CD4-positive, alpha-beta memory T cell (primary cell): ENCODE measurements at regions of chr19 and their contacts with region 1.

Region 1: DNA sequence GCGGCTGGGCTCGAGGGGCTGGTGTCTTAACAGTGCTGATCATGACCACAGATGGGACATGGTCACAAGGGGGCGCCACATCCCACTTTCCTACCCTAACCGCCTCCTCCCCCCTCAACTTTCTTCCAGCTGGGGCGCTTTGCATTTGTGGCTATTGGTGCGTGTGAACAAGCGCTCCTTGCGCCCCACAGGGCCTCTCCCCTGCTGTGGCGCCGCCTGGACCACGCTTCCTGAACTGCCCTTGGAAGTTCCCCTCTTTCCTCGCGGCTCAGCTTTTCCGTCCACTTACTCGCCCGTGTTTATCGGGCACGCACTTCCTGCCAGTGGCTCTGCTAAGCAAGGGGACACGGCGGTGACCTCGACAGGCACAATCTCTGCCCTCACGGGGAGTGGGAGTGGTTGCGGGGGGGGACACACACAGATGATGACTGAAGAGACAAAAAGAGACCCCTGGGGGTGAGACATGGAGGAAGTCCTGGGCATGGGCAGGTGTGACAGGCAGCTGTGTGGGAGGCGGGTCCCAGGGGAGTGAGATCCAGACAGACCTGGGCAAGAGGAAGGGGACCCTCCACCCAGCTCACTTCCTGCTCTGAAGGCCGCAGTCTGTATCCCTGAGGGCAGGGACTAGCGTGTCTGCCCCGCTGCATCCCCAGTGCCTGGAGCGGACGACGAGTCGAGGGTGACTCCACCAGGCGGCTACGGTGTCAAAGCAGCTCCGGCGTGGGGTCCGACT is 40.3 kb downstream of the ZNF787 start:
- DNase-seq: peak; percentile 47 to 74 (median 60)
- H3K4me3 ChIP-seq: peak overlapping the region; percentile 23 to 59
- H3K4me3 Mint-ChIP-seq: peak overlapping the region; percentile 79 to 94 (median 84)
- H3K27ac ChIP-seq: no peak overlapping the region
- H3K27ac Mint-ChIP-seq: peak overlapping the region in 2 of 7 donors; percentile 34 to 48
- H3K4me1 ChIP-seq: peaks cover 10% of the 10 kb centered on the region
- H3K4me1 Mint-ChIP-seq: peaks cover 10 to 15% (median 12%) of the 10 kb centered on the region in 4 donors
- H3K27me3 ChIP-seq: no peaks in the 10 kb centered on the region
- H3K27me3 Mint-ChIP-seq: peaks cover 0 to 5% of the 10 kb centered on the region in 2 donors

Region 2: GRCh38 chr19:56142087-56142787 is 61.4 kb after region 1 on chr19:
- CTCF ChIA-PET with region 1: no interaction called
- POLR2A ChIA-PET with region 1: no interaction called
- intact Hi-C with region 1: no loop called
- DNase-seq: no peak
- H3K4me3 ChIP-seq: peak overlapping the region; percentile 25 to 51
- H3K4me3 Mint-ChIP-seq: peak overlapping the region; percentile 78 to 96 (median 84)
- H3K27ac ChIP-seq: peak overlapping the region; percentile 73
- H3K27ac Mint-ChIP-seq: peak overlapping the region; percentile 78 to 92 (median 84)
- H3K4me1 ChIP-seq: peaks cover 22% of the 10 kb centered on the region
- H3K4me1 Mint-ChIP-seq: peaks cover 24 to 46% (median 33%) of the 10 kb centered on the region in 4 donors
- H3K27me3 ChIP-seq: no peaks in the 10 kb centered on the region
- H3K27me3 Mint-ChIP-seq: no peaks in the 10 kb centered on the region

Region 3: DNA sequence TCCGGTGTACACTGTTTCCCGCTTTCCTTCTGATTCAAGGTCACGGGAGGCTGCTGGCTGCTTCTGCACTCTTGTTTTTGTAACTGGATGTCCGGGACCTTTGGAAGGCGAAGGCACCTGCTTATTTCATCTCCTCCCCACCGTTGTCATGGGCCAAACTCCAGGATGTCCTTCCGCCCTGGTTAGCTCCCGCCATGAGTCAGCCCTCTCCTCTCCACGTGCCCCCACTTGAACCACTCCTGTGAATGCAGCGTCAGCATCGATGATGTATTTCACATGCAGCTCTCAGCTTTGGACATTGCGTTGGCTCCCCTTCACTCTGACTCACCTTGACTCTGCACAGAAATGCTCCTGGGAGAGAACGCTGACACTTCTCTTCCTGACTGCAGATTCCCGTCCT is 89.4 kb after region 1 on chr19:
- CTCF ChIA-PET with region 1: interaction called, 48 read pairs
- POLR2A ChIA-PET with region 1: no interaction called
- intact Hi-C with region 1: loop called (anchors 1 kb)
- DNase-seq: no peak
- H3K4me3 ChIP-seq: no peak overlapping the region
- H3K4me3 Mint-ChIP-seq: no peak overlapping the region
- H3K27ac ChIP-seq: no peak overlapping the region
- H3K27ac Mint-ChIP-seq: peak overlapping the region in 1 of 7 donors; percentile 9
- H3K4me1 ChIP-seq: no peaks in the 10 kb centered on the region
- H3K4me1 Mint-ChIP-seq: peaks cover 0 to 5% (median 3%) of the 10 kb centered on the region in 4 donors
- H3K27me3 ChIP-seq: no peaks in the 10 kb centered on the region
- H3K27me3 Mint-ChIP-seq: peaks cover 9 to 12% of the 10 kb centered on the region in 2 donors

Region 4: DNA sequence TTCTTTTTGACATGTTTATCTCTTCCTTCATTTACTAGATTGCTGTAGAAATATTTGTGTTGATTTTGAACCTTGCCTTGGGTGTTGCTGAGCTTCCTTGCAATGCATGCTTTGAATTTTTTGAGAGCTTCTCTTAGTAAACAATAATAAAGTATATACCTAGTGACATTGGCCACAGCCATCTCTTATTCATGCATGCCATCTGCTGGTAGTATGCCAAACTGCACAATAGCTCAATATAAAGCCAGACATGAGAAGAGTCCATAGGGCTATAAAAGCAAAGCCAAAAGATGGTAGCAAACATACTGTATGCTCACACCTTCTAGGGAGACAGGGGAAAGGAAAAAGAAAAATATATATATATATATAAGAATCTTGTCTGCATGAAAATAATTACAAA is 252.7 kb after region 1 on chr19:
- CTCF ChIA-PET with region 1: interaction called, 16 read pairs
- POLR2A ChIA-PET with region 1: no interaction called
- intact Hi-C with region 1: no loop called
- DNase-seq: peak in 4 of 5 donors; percentile 29 to 40 (median 40)
- H3K4me3 ChIP-seq: no peak overlapping the region
- H3K4me3 Mint-ChIP-seq: no peak overlapping the region
- H3K27ac ChIP-seq: no peak overlapping the region
- H3K27ac Mint-ChIP-seq: no peak overlapping the region
- H3K4me1 ChIP-seq: no peaks in the 10 kb centered on the region
- H3K4me1 Mint-ChIP-seq: no peaks in the 10 kb centered on the region
- H3K27me3 ChIP-seq: no peaks in the 10 kb centered on the region
- H3K27me3 Mint-ChIP-seq: peaks cover 3 to 6% of the 10 kb centered on the region in 2 donors

Region 5: DNA sequence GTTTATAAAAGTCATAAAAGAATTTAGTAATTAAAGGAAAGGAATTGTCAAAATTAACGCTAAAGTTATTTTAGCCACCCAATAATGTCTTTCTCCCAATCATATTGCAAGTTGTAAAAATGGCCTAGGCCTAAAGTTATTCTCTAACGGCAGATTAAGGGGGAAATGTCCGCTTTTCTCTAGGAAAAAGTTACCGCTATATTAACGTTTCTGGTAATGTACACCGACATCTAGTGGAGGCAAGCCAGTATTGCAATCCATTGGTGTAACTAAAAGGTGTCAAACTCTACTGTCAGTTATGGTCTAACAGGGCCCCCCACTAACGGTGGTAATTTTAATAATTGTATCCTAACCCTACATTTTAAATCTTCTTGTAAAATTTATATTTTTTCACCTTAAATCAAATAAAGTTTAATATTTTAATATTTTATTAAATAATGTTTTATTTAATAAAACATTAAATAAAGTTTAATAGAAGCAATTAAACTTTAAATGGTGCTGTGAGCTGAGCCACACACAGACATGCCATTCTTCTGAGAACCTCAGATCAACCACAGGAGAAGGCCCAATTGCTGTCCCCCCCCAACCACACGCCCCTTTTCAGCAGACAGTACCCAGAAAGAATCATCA is 269.7 kb after region 1 on chr19:
- CTCF ChIA-PET with region 1: interaction called, 3 read pairs
- POLR2A ChIA-PET with region 1: no interaction called
- intact Hi-C with region 1: loop called (anchors 1 kb)
- DNase-seq: peak; percentile 35 to 57 (median 46)
- H3K4me3 ChIP-seq: no peak overlapping the region
- H3K4me3 Mint-ChIP-seq: no peak overlapping the region
- H3K27ac ChIP-seq: no peak overlapping the region
- H3K27ac Mint-ChIP-seq: no peak overlapping the region
- H3K4me1 ChIP-seq: no peaks in the 10 kb centered on the region
- H3K4me1 Mint-ChIP-seq: peaks cover 0 to 1% (median 0%) of the 10 kb centered on the region in 4 donors
- H3K27me3 ChIP-seq: no peaks in the 10 kb centered on the region
- H3K27me3 Mint-ChIP-seq: peaks cover 1% of the 10 kb centered on the region in 2 donors